Activated naive CD4-positive, alpha-beta T cell treated with anti-CD3 and anti-CD28 coated beads for 36 hours (primary cell): ENCODE measurements at regions of chr7 and their contacts with region 1.

Region 1: DNA sequence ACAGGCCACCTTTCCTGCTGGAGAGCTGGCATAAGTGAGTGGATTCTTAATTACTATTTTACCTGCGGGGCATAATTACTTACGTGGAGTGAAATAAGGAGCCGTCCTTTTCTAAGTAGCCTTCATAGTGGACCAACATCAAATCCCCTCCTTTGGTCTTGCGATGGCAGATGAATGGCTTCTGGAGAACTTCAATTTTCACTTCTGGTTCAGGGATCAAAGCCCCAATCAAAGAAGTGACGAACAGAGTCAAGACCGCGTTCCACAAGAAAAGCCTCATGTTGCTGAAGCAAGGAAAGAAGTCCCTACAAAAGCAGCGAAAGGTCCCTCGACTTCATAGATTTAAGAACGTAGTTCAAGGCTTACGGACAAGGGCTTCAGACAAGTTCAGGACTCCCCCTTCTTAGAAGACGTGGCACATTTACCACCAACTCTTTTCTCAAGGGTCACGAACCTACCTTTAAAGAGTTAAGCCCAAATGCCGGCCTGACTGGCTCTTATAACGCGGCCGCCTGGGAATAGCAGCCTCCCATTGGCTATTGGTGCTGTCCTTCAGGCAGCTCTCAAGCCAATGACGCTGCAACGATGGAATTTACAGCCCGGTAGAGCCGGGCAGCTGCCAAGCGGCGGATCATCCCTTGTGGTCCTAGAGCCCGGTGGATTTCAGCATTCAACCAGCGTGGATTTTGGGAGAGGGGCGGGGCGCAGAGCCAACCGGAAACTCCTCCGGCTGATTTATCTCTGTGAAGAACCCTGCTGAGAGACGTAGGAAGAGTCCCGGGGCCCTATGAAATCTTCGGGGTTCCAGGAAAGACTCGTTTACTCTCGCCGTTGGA is at the start of gene FKBP14:
- DNase-seq: peak; percentile 96
- H3K4me3 Mint-ChIP-seq: no peak within 1 kb of the TSS
- H3K27ac Mint-ChIP-seq: peak within 1 kb of the TSS; percentile 75
- H3K4me1 Mint-ChIP-seq: peaks cover 27% of the 10 kb centered on the region
- H3K27me3 Mint-ChIP-seq: no peaks in the 10 kb centered on the region
- total RNA-seq, gene FKBP14: 4.7 to 5.2 TPM

Region 2: DNA sequence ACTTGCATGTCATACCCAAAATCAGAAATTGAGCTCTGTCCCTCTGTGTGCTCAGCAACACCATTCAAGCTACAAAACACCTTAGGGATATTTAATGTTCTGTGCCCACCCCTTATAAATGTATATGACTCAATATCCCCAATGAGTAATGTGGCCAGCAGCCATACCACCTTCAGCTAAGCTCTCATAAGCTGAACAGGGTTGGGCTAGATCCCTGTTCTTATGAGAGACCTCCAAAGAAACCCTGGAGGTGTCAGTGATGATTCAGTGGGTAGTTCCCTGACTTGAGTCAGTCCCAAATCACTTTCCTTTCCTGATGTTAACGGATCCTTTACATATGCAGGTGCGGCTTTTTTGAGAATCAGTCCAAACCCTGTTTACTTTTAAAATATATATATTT is 1360.3 kb before region 1 on chr7:
- CTCF ChIA-PET with region 1: no interaction called
- intact Hi-C with region 1: no loop called
- DNase-seq: no peak
- H3K4me3 Mint-ChIP-seq: no peak overlapping the region
- H3K27ac Mint-ChIP-seq: no peak overlapping the region
- H3K4me1 Mint-ChIP-seq: peaks cover 4% of the 10 kb centered on the region
- H3K27me3 Mint-ChIP-seq: peaks cover 16% of the 10 kb centered on the region

Region 3: DNA sequence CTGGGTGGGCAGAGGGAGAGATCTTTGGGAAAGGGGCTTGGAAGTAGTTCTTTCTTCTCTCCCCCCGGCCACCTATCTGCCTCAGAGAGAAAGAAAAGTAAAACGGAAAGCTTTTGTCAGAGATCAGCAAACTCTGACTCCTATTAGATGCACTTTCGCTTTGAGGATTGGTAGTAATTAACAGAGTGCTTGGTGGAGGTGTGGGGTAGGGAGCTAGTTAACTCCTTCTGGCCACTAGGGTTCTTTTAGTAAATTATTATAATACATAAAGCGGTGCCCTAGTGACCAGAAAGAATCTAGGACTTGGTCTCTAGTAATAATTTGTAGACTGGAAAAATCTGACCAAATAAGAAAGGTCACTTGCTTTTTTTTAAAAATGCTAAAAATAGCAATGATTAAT is 934.7 kb before region 1 on chr7:
- CTCF ChIA-PET with region 1: no interaction called
- intact Hi-C with region 1: loop called (anchors 5 kb)
- DNase-seq: peak; percentile 21
- H3K4me3 Mint-ChIP-seq: peak overlapping the region; percentile 78
- H3K27ac Mint-ChIP-seq: peak overlapping the region; percentile 86
- H3K4me1 Mint-ChIP-seq: peaks cover 13% of the 10 kb centered on the region
- H3K27me3 Mint-ChIP-seq: peaks cover 3% of the 10 kb centered on the region

Region 4: GRCh38 chr7:30062591-30062990 is 36.1 kb after region 1 on chr7:
- CTCF ChIA-PET with region 1: interaction called, 10 read pairs
- intact Hi-C with region 1: loop called (anchors 1 kb)
- DNase-seq: no peak
- H3K4me3 Mint-ChIP-seq: no peak overlapping the region
- H3K27ac Mint-ChIP-seq: no peak overlapping the region
- H3K4me1 Mint-ChIP-seq: peaks cover 5% of the 10 kb centered on the region
- H3K27me3 Mint-ChIP-seq: no peaks in the 10 kb centered on the region

Region 5: GRCh38 chr7:30164567-30164966 is 138.1 kb after region 1 on chr7:
- CTCF ChIA-PET with region 1: no interaction called
- intact Hi-C with region 1: loop called (anchors 2 kb)
- DNase-seq: no peak
- H3K4me3 Mint-ChIP-seq: no peak overlapping the region
- H3K27ac Mint-ChIP-seq: peak overlapping the region; percentile 14
- H3K4me1 Mint-ChIP-seq: peaks cover 32% of the 10 kb centered on the region
- H3K27me3 Mint-ChIP-seq: no peaks in the 10 kb centered on the region

Region 6: DNA sequence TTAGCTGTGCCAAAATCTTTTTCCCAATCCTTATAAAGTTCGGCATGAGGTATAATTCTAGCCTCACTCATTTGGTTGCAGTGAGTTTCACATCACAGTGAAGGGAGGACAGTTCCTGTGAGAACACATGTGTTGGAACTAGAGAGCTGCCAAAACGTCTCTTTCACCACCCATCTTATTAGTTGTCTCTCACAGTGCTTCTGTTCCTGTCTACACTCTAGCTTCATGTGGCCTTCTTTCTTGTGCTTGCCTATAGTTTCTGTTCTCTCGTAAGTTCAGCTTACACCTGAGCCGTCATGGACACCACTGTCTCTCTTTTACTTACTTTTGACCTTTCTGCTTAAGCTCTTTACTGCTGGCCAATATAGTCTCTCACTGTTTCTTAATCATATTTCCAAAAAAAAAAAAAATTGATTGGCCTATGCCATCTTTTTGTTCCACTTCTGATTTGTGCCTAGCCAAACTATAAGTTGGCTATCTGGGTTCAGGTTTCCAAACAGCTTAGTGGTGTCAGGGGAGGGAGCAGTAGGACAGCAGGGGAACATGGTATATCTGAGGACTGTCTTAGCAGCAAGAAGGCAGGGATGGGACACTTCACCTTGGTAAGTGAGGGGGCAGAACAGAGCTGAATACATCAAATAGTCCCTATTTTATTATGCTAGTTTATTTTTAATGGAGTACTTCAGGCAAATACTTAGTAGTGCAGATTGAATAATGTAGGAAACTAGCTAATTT is 296.0 kb after region 1 on chr7:
- CTCF ChIA-PET with region 1: no interaction called
- intact Hi-C with region 1: loop called (anchors 2 kb)
- DNase-seq: peak; percentile 40
- H3K4me3 Mint-ChIP-seq: peak overlapping the region; percentile 78
- H3K27ac Mint-ChIP-seq: peak overlapping the region; percentile 92
- H3K4me1 Mint-ChIP-seq: peaks cover 62% of the 10 kb centered on the region
- H3K27me3 Mint-ChIP-seq: no peaks in the 10 kb centered on the region

Region 7: DNA sequence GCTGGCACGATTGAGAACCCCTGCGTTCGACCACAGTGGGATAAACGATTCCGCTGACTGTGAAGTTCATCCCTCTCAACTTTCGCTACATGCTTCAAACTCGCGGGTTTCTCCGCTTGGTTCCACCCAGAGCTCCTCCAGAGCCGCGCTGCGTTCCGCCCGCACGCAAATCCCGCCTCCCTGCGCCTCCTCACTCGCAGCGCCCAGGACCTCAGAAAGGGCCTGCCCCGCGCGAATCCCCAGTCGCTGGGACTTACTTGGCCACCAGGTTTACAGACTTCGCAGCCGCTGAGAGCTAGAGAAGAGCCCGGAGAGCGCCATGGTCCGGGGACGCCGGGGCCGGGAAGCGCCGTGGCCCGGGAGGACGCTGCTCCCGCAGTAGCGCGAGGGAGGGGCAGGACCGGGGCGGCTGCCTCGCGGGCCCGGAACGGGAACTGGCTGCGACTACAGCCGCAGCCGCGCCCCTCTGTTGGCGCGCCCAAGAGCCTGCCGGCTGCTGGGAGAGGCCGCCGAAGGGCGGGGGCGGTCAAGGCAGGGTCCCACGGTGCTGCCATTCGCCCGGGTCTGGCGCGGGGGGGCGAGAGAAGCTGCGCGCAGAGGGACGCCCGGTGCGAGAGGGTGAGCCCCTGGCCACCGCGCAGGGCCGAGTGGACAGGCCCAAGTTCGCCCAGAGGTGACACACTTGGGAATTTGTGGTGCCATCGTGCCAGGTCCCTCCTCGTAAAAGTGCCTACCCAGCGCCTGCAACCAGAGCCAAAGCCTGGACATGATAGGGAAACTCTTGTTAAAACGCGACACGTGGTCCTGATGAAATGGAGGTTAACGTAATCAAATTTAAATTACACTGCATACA is 452.1 kb after region 1 on chr7 and contains the start of gene NOD1:
- CTCF ChIA-PET with region 1: no interaction called
- intact Hi-C with region 1: loop called (anchors 1 kb)
- DNase-seq: peak; percentile 73
- H3K4me3 Mint-ChIP-seq: peak within 1 kb of the TSS; percentile 89
- H3K27ac Mint-ChIP-seq: peak within 1 kb of the TSS; percentile 87
- H3K4me1 Mint-ChIP-seq: peaks cover 52% of the 10 kb centered on the region
- H3K27me3 Mint-ChIP-seq: no peaks in the 10 kb centered on the region
- total RNA-seq, gene NOD1: 9.2 to 9.8 TPM

Region 8: GRCh38 chr7:30594549-30595435 is 568.3 kb after region 1 on chr7 and contains the start of gene GARS1:
- CTCF ChIA-PET with region 1: no interaction called
- intact Hi-C with region 1: loop called (anchors 2 kb)
- DNase-seq: peak; percentile 88
- H3K4me3 Mint-ChIP-seq: peak within 1 kb of the TSS; percentile 96
- H3K27ac Mint-ChIP-seq: peak within 1 kb of the TSS; percentile 97
- H3K4me1 Mint-ChIP-seq: peaks cover 49% of the 10 kb centered on the region
- H3K27me3 Mint-ChIP-seq: no peaks in the 10 kb centered on the region
- total RNA-seq, gene GARS1: 367 to 385 TPM